ENCODE measurements at regions of chr12 and their contacts with region 1.

Region 1: DNA sequence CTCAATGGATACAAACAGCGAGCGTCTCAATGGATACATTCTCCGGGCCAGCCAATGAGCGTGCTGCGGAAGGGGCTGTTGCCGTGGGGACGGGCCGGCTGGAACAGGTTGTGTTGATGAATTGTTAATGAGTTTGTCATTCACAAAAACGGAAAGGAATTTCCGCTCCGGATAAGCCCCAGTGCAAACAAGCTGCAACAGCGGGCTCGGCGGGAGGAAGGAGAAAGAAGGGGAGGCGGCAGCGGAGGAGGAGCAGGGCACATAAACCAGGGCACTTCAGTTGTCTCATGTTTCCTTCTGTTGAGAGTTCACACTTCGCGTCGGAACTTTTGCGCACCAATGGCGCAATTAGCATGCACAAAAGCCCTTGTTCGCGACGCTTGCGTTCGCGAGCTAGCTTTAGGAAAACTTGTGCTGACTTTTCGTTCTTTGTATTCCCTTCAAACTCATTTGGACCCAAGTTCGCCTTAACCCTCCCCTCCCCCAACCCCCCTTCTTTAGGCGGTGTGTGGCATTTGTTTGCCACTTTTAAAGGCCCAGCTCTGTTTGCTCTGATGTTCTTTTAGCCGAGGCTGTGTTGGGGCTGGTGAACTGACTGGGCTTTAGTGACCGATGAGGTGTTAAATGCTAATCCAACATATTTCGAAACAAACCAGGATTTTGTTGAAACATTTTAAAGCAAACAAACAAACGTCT is at the start of gene DUSP6:
- DNase-seq: peak; percentile 97
- H3K4me3 Mint-ChIP-seq: peak within 1 kb of the TSS; percentile 89
- H3K27ac Mint-ChIP-seq: peak within 1 kb of the TSS; percentile 92
- H3K4me1 Mint-ChIP-seq: peaks cover 29% of the 10 kb centered on the region
- H3K27me3 Mint-ChIP-seq: peaks cover 2% of the 10 kb centered on the region
- total RNA-seq, gene DUSP6: 24.8 to 26.1 TPM

Region 2: DNA sequence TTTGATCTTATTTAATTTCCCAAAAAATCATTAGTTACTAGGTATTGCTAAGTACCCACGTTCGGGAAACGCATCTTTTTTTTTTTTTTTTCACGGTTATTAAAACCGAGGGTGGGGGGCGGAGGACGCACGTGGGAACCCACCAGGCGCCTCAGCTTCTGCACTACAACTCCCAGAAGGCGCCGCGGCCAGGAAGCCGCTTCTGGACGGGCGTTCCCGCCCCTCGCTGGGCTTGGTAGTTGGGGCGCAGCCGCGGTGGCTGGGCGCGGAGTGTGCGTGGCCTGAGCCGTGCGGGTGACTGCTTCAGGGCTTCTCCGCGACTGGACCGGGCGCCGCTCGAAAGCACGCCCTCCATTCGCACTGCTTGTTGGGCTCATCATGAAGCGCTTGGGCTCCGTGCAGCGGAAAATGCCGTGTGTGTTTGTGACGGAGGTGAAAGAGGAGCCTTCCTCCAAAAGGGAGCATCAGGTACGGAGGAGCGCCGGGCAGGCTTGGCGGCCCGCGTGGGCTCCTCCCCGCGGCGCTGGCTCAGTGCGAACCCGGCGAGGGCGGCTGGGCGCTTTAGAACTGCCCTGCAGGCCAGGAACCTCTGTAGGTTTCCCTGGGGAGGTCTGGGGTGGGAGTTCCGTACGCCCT is 1317.3 kb before region 1 on chr12:
- CTCF ChIA-PET with region 1: no interaction called
- intact Hi-C with region 1: loop called (anchors 5 kb)
- DNase-seq: peak; percentile 89
- H3K4me3 Mint-ChIP-seq: peak overlapping the region; percentile 93
- H3K27ac Mint-ChIP-seq: peak overlapping the region; percentile 90
- H3K4me1 Mint-ChIP-seq: peaks cover 52% of the 10 kb centered on the region
- H3K27me3 Mint-ChIP-seq: no peaks in the 10 kb centered on the region

Region 3: DNA sequence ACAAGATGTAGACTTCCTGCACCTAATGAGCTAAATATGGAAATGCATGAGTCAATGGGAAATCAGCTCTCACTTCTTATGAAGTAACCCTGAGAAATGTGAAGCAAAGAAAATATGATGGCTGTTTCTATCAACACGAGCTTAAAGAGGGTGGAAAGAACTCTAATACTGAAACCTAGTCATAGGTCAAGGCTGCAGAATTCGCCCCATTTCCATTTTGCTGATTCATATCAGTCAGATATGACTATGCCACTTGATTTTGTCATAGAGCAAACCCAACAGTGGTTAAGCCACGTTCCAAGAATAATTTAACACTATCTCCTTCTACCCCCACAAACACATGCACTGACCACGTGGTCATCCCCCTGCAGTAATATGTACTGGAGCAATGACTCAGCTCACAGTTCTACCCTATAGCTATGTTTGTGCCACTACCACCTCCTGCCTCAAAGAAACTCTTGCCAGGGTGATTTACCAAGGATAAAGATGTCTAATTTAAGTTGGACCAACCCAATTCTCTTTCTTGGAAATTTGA is 1053.0 kb before region 1 on chr12:
- CTCF ChIA-PET with region 1: no interaction called
- intact Hi-C with region 1: loop called (anchors 2 kb)
- DNase-seq: peak; percentile 50
- H3K4me3 Mint-ChIP-seq: no peak overlapping the region
- H3K27ac Mint-ChIP-seq: peak overlapping the region; percentile 9
- H3K4me1 Mint-ChIP-seq: peaks cover 17% of the 10 kb centered on the region
- H3K27me3 Mint-ChIP-seq: peaks cover 5% of the 10 kb centered on the region

Region 4: GRCh38 chr12:88746386-88746785 is 606.3 kb before region 1 on chr12:
- CTCF ChIA-PET with region 1: no interaction called
- intact Hi-C with region 1: no loop called
- DNase-seq: no peak
- H3K4me3 Mint-ChIP-seq: no peak overlapping the region
- H3K27ac Mint-ChIP-seq: no peak overlapping the region
- H3K4me1 Mint-ChIP-seq: no peaks in the 10 kb centered on the region
- H3K27me3 Mint-ChIP-seq: no peaks in the 10 kb centered on the region

Region 5: GRCh38 chr12:89073027-89073398 is 279.6 kb before region 1 on chr12:
- CTCF ChIA-PET with region 1: interaction called, 3 read pairs
- intact Hi-C with region 1: loop called (anchors 1 kb)
- DNase-seq: peak; percentile 32
- H3K4me3 Mint-ChIP-seq: no peak overlapping the region
- H3K27ac Mint-ChIP-seq: peak overlapping the region; percentile 57
- H3K4me1 Mint-ChIP-seq: peaks cover 36% of the 10 kb centered on the region
- H3K27me3 Mint-ChIP-seq: no peaks in the 10 kb centered on the region

Region 6: GRCh38 chr12:89181271-89181920 is 171.2 kb before region 1 on chr12:
- CTCF ChIA-PET with region 1: interaction called, 5 read pairs
- intact Hi-C with region 1: loop called (anchors 1 kb)
- DNase-seq: no peak
- H3K4me3 Mint-ChIP-seq: no peak overlapping the region
- H3K27ac Mint-ChIP-seq: peak overlapping the region; percentile 50
- H3K4me1 Mint-ChIP-seq: peaks cover 22% of the 10 kb centered on the region
- H3K27me3 Mint-ChIP-seq: peaks cover 3% of the 10 kb centered on the region

Region 7: GRCh38 chr12:89234324-89235114 is 118.1 kb before region 1 on chr12:
- CTCF ChIA-PET with region 1: no interaction called
- intact Hi-C with region 1: no loop called
- DNase-seq: no peak
- H3K4me3 Mint-ChIP-seq: no peak overlapping the region
- H3K27ac Mint-ChIP-seq: no peak overlapping the region
- H3K4me1 Mint-ChIP-seq: peaks cover 73% of the 10 kb centered on the region
- H3K27me3 Mint-ChIP-seq: no peaks in the 10 kb centered on the region

Region 8: DNA sequence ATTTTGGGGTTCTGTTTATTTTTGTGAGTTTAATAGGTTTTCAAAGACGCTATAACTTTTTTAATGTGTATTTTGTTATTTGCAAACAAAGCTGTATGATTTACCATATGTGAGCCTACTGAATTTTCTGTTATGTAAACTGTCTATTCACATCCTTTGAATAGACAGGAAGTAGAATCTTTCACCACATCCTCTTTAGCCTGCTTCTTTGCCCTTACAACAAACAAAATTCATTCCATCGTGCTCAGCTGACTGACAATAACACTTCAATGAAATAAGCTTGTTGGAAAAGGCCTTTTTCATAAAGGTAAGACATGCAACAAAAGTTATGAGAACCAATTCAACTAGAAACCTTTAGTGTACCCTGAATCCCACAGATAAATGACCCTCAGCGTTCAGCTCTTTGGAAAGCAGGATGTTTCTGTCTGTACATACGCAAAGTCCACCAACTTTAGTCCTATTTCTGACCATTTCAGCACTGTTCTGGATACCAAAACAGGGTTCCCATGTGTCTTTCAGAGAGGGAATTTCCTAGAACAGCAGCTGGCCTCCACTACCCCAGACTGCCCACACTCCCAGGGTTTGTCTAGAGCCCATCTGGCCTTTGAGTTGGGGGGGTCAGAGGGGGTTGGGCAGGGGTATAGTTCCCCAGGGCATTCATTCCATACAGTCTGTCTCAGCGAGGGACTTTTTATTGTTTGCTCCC is 71.7 kb before region 1 on chr12:
- CTCF ChIA-PET with region 1: no interaction called
- intact Hi-C with region 1: loop called (anchors 1 kb)
- DNase-seq: no peak
- H3K4me3 Mint-ChIP-seq: peak overlapping the region; percentile 36
- H3K27ac Mint-ChIP-seq: peak overlapping the region; percentile 71
- H3K4me1 Mint-ChIP-seq: peaks cover 30% of the 10 kb centered on the region
- H3K27me3 Mint-ChIP-seq: no peaks in the 10 kb centered on the region

Region 9: DNA sequence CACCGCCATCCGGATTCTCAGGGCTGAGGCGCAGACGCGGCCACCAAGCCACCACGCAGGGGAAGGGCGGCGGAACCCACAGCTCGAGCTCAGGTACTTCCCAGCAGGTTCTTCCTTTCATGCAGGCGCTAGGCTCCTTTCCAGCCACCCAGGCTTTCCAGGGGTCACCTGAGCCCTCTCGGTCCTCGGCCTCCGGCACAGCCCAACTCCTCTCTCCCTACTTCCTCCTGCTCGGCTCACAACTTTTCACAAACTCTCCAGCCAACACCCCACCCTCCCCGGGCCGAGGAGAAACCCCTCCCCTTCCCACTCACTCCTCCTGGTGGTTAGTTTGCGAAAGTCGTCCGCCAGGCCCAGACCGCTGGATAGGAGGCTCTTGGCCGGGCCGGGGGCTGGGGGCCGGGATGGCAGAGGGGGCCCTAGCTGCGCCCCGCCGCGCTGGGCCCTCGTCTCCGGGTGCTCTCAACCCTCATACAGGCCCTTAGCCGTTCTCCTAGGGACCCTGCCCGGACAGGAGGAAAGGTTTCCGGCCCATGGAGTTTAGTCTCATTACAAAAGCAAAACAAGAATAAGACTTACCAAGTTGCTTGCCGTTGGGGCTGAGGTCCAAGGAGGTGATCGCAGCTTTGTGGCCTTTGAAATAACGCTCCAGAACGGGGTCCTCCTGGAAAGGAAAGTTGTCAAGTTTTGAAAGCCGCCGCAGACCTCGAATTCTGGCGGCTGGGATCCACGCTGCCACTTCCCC is 172.1 kb after region 1 on chr12 and contains the start of gene GALNT4:
- CTCF ChIA-PET with region 1: no interaction called
- intact Hi-C with region 1: loop called (anchors 1 kb)
- DNase-seq: peak; percentile 80
- H3K4me3 Mint-ChIP-seq: peak within 1 kb of the TSS; percentile 94
- H3K27ac Mint-ChIP-seq: peak within 1 kb of the TSS; percentile 93
- H3K4me1 Mint-ChIP-seq: peaks cover 41% of the 10 kb centered on the region
- H3K27me3 Mint-ChIP-seq: no peaks in the 10 kb centered on the region
- total RNA-seq, gene GALNT4: 2.9 to 3.4 TPM